Activated CD4-positive, alpha-beta memory T cell treated with anti-CD3 and anti-CD28 coated beads for 36 hours (primary cell): ENCODE measurements at regions of chr10 and their contacts with region 1.

Region 1: DNA sequence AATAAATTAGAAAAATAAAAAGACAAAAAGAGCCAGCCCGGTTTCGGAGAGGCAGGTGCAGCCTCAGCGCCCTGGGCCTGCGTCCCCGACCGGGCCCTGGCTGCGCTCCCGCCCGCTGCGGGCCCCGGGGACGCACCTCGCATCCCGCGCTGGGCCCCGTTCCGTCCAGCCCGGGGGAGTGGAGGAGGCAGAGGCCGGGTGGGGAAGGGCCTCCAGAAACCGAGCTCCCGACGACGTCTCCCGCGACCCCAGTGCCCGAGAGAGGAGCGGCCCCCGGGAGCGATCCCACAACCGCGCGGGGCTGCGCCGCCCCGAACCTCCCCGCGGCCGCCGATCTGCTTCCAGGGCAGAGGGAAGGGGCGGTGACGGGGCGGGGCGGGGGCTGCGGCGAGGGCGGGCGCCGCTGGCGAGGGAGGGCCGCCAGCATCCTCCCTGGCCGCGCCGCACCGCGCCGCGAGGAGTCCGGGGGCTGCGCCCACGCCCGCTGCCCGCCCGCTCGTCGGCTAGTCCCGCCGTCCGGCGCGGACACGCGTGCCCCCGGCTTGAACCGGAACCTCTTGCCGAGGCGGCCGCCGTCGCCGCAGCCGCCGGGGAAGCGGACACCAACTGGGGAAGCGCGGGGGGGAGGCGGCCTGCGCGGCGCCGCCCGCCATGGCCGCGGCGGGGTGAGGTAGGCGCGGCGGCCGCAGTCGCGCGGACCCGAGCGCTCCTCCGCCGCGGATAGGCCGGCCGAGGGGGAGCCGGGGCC is at the start of gene CCNY:
- DNase-seq: peak; percentile 85
- H3K4me3 Mint-ChIP-seq: peak within 1 kb of the TSS; percentile 86
- H3K27ac Mint-ChIP-seq: peak within 1 kb of the TSS; percentile 87
- H3K4me1 Mint-ChIP-seq: peaks cover 68% of the 10 kb centered on the region
- H3K27me3 Mint-ChIP-seq: no peaks in the 10 kb centered on the region
- total RNA-seq, gene CCNY: 34.6 to 36.2 TPM

Region 2: GRCh38 chr10:34994565-34995142 is 341.6 kb before region 1 on chr10:
- CTCF ChIA-PET with region 1: no interaction called
- POLR2A ChIA-PET with region 1: no interaction called
- intact Hi-C with region 1: loop called (anchors 10 kb)
- DNase-seq: peak; percentile 69
- H3K4me3 Mint-ChIP-seq: no peak overlapping the region
- H3K27ac Mint-ChIP-seq: no peak overlapping the region
- H3K4me1 Mint-ChIP-seq: peaks cover 11% of the 10 kb centered on the region
- H3K27me3 Mint-ChIP-seq: no peaks in the 10 kb centered on the region

Region 3: DNA sequence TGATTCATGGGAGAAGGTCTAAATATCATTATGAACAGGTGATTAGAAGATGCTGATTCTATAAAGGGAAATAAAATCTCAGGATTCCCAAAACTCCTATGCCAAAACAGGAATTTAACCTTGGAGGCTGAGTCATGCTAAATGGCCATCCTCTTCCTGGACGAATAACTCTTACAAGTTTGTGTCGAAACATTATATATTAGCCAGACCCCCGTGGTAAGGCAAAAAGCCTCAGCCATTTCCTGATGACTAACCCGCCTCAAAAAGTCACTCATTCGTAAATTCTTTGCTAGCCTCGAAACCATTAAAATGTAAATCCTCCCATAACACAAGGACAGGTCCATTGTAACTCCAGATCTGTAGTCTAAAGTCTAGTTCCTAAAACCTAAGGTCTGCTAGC is 278.1 kb before region 1 on chr10:
- CTCF ChIA-PET with region 1: no interaction called
- POLR2A ChIA-PET with region 1: no interaction called
- intact Hi-C with region 1: no loop called
- DNase-seq: no peak
- H3K4me3 Mint-ChIP-seq: no peak overlapping the region
- H3K27ac Mint-ChIP-seq: no peak overlapping the region
- H3K4me1 Mint-ChIP-seq: peaks cover 2% of the 10 kb centered on the region
- H3K27me3 Mint-ChIP-seq: no peaks in the 10 kb centered on the region

Region 4: DNA sequence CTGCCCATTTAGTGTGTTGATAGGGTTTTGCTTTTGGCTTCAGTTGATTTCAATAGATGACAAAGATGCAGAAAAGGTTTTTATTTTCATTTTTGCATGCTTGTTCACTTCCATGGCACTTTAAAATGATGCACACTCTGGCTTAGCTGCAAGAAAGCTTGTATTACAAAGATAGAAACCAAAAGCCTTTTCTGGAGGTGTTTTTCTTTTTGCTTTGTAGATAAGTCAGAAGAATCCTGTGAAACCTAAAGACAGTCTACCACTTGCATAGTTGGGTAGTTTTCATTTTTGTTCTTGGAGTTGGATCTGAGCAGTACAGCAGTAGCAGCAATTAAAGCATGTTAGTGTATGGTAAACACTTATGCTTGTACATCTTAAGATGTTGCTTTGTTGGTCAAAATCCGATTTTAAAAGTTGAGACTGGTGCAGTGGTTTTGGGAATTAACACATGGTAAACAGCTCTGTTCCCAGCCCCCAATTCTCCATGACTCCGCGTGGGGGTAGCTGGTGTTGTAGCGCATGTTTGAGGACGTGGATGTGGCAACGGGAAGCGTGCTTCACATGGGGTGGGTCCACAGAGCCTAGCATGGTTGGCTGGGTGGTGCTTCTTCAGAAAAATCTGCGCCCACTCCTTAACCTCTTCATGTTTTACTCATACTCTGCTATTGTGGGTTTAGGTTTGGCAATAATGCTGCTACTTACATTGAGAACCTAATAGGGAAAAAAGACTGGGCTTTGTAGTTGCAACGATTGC is 19.9 kb after region 1 on chr10:
- CTCF ChIA-PET with region 1: interaction called, 5 read pairs
- POLR2A ChIA-PET with region 1: interaction called, 15 read pairs
- intact Hi-C with region 1: loop called (anchors 1 kb)
- DNase-seq: peak; percentile 69
- H3K4me3 Mint-ChIP-seq: peak overlapping the region; percentile 63
- H3K27ac Mint-ChIP-seq: peak overlapping the region; percentile 94
- H3K4me1 Mint-ChIP-seq: peaks cover 77% of the 10 kb centered on the region
- H3K27me3 Mint-ChIP-seq: no peaks in the 10 kb centered on the region

Region 5: DNA sequence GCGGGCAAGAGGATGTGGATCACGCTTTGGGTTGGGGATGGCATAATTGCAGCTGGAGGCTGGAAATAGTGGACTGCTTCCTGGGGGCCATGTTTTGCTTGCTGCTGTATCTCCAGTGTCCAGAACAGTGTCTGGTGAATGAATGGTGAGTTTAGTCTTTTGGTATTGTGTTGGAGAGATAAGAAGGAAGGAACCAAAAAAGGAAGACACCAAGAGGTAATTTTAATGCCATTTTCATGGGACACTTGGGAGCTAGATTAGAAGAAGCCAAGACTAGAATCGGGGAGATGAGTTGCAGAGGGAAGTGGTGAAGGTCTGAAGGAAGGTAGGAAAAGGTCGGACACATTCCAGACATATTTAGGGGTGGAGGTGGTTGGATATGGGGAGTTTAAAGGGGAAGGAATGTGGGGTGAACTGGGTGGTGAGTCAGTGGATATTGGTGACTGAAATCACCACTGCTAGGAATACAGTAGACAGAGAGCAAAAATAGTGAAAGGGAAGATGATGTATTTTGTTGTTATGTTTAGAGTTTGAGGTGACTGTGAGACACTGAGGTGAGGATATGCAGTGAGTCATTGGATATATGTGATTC is 76.7 kb after region 1 on chr10:
- CTCF ChIA-PET with region 1: no interaction called
- POLR2A ChIA-PET with region 1: interaction called, 3 read pairs
- intact Hi-C with region 1: loop called (anchors 1 kb)
- DNase-seq: no peak
- H3K4me3 Mint-ChIP-seq: no peak overlapping the region
- H3K27ac Mint-ChIP-seq: no peak overlapping the region
- H3K4me1 Mint-ChIP-seq: peaks cover 44% of the 10 kb centered on the region
- H3K27me3 Mint-ChIP-seq: no peaks in the 10 kb centered on the region

Region 6: DNA sequence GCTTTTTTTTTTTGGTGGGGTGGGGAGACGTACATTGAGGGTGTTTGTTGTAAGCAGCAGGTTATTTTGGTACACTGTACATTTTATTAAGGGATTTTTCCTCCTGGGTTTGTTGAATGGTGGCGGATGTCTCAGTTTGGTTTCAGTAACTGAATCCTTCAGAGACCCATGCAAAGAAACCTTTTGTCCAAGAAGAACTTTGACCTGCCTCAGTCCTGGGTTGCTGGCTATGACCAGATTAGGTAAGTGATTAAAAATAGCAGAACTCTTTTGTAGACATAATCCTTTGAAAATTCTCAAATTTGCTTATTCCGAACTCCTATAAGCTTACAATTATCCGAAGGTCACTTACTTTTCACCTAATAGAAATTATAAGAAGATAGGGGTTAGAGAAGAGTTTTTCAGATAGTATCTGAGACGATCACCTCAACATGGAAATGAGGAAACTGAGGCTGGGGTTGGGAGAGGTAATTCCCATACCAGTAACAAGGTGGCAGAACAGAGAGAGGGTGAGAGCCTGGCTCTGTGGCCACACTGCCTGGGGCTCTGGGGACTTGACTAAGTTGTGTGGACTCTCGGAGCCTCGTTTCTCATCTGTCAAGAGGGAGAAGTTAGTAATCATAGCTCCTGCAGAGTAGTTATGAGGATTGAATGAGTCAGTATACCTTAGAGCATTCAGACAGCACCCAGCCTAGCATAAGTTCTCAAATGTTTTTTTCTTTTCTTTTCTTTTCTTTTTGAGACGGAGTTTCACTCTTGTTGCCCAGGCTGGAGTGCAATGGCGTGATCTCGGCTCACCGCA is 87.4 kb after region 1 on chr10:
- CTCF ChIA-PET with region 1: no interaction called
- POLR2A ChIA-PET with region 1: no interaction called
- intact Hi-C with region 1: no loop called
- DNase-seq: no peak
- H3K4me3 Mint-ChIP-seq: no peak overlapping the region
- H3K27ac Mint-ChIP-seq: no peak overlapping the region
- H3K4me1 Mint-ChIP-seq: peaks cover 58% of the 10 kb centered on the region
- H3K27me3 Mint-ChIP-seq: no peaks in the 10 kb centered on the region

Region 7: DNA sequence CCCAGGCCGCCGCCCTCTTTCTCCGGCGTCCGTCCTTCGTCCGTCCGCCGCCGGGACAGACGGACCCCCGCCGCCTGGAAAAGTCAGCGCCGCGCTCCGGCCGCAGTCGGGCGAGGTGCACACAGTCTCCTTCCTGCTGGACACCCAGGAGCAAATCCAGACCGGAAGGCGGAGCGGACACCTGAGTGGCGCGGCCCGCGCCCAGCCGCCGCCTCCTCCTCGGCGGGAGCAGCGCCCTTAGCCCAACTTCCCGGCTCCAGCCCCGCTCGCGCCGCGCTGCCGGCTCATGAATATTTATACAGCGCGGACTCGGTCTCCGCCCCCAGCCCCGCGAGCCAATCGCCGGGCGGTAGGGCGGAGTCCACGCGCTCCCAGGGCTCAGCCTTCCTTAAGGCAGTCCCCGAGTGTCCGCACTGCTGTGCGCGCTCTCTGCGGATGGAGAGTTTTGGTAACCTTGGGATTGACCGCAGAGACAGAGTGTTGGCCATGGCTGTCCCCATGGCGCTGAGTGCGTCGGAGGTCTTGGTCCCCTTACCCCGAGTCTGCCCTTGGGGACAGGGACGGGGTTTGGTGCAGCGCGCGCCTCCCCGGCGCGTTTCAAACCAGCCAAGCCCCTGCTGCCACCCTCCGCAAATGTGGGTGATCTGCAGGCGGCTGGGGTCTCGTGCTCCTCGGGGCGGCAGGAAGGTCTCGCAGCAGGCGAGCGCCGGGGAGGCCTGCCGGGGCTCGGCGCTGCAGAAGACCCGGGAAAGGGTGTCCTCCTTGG is 306.0 kb after region 1 on chr10 and contains the start of gene FZD8:
- CTCF ChIA-PET with region 1: no interaction called
- POLR2A ChIA-PET with region 1: no interaction called
- intact Hi-C with region 1: loop called (anchors 5 kb)
- DNase-seq: peak; percentile 83
- H3K4me3 Mint-ChIP-seq: peak within 1 kb of the TSS; percentile 78
- H3K27ac Mint-ChIP-seq: no peak within 1 kb of the TSS
- H3K4me1 Mint-ChIP-seq: peaks cover 27% of the 10 kb centered on the region
- H3K27me3 Mint-ChIP-seq: peaks cover 34% of the 10 kb centered on the region
- total RNA-seq, gene FZD8: 0.31 to 0.45 TPM